ENCODE measurements at regions of chr16 and their contacts with region 1.

Region 1: DNA sequence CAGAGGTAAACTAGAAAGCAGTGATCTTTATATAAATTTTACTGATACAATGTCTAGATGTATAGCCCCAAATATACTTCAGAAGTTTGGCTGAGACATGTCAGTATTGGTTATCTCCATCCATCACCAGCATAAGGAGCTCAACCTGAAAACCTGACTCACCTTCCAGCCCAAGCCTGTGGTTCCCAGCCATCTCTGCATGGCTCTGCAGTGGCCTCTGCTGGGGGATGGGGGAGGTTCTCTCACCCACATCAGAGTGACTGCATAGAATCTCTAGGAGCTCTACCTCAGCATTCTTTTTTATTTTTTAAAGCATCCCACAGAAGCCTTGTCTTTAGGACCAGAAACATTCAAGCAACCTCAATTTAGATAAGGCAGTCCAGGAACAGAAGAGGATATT is 27.3 kb downstream of the USP7 start:
- DNase-seq: peak; percentile 16
- ATAC-seq: peak; percentile 96
- H3K4me3 ChIP-seq: no peak overlapping the region
- H3K27ac ChIP-seq: no peak overlapping the region
- H3K4me1 ChIP-seq: peaks cover 7 to 19% of the 10 kb centered on the region in 2 experiments
- H3K27me3 ChIP-seq: no peaks in the 10 kb centered on the region
- CTCF ChIP-seq: peak; percentile 19 to 82 (median 64); a peak in 5 of 6 replicates
- POLR2A ChIP-seq: no peak
- RAD21 ChIP-seq: peak; percentile 42

Region 2: GRCh38 chr16:8948831-8949230 is 12.4 kb after region 1 on chr16:
- CTCF ChIA-PET with region 1: interaction called, 10 read pairs
- POLR2A ChIA-PET with region 1: no interaction called
- RAD21 ChIA-PET with region 1: interaction called in 1 of 2 experiments, 3 read pairs
- intact Hi-C with region 1: no loop called
- DNase-seq: no peak
- ATAC-seq: no peak
- H3K4me3 ChIP-seq: no peak overlapping the region
- H3K27ac ChIP-seq: no peak overlapping the region
- H3K4me1 ChIP-seq: peaks cover 0 to 3% of the 10 kb centered on the region in 2 experiments; a peak in 2 of 4 replicates
- H3K27me3 ChIP-seq: no peaks in the 10 kb centered on the region
- CTCF ChIP-seq: no peak
- POLR2A ChIP-seq: no peak
- RAD21 ChIP-seq: no peak

Measured in HCT116 (cell line).